Dendritic cell treated with granulocyte-macrophage colony-stimulating factor and Interleukin-4, amounts not matched to agents 40 ng/mL and 50 ng/mL, for 4 days (primary cell): ENCODE measurements at regions of chr2 and their contacts with region 1.

Region 1: GRCh38 chr2:26846328-26847306 is 1.3 kb upstream of the DPYSL5 start:
- H3K4me3 Mint-ChIP-seq: peak overlapping the region; percentile 13
- H3K27ac Mint-ChIP-seq: no peak overlapping the region
- H3K4me1 Mint-ChIP-seq: peaks cover 6% of the 10 kb centered on the region
- H3K27me3 Mint-ChIP-seq: peaks cover 70% of the 10 kb centered on the region

Region 2: GRCh38 chr2:26922405-26923188 is 76.0 kb after region 1 on chr2:
- intact Hi-C with region 1: loop called (anchors 5 kb)
- H3K4me3 Mint-ChIP-seq: no peak overlapping the region
- H3K27ac Mint-ChIP-seq: no peak overlapping the region
- H3K4me1 Mint-ChIP-seq: peaks cover 16% of the 10 kb centered on the region
- H3K27me3 Mint-ChIP-seq: peaks cover 4% of the 10 kb centered on the region

Region 3: GRCh38 chr2:26942543-26943295 is 96.1 kb after region 1 on chr2:
- intact Hi-C with region 1: loop called (anchors 1 kb)
- H3K4me3 Mint-ChIP-seq: no peak overlapping the region
- H3K27ac Mint-ChIP-seq: no peak overlapping the region
- H3K4me1 Mint-ChIP-seq: peaks cover 6% of the 10 kb centered on the region
- H3K27me3 Mint-ChIP-seq: peaks cover 26% of the 10 kb centered on the region

Region 4: DNA sequence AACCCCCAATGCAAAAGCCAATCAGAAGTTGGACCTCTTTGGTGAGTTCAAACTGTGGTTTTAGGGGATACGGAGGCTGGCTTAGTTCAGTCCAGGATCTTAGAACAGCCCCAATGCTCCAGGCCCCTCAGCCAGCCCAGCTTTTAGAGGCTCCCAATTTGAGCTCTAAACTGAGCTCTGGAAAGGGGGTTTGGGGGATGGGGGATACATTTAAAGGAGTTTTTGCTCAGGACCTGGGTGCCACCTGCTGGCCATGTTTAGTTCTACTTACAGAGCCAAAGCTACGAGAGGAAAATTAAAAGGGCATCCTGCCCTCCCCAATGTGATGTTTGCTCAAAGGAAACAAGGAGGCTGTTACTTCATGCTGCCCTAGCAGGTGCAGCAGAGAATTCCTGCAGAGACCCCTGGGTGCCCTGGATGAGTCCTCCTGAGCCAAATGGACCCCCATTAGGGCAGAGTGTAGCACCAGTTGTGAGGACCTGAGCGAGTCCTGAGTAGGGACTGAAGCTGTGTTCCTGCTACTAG is 170.2 kb after region 1 on chr2:
- intact Hi-C with region 1: loop called (anchors 5 kb)
- H3K4me3 Mint-ChIP-seq: no peak overlapping the region
- H3K27ac Mint-ChIP-seq: no peak overlapping the region
- H3K4me1 Mint-ChIP-seq: peaks cover 10% of the 10 kb centered on the region
- H3K27me3 Mint-ChIP-seq: peaks cover 2% of the 10 kb centered on the region

Region 5: GRCh38 chr2:27370026-27370815 is 523.6 kb after region 1 on chr2 and contains the starts of genes EIF2B4 and SNX17:
- intact Hi-C with region 1: no loop called
- H3K4me3 Mint-ChIP-seq: peak within 1 kb of the TSS; percentile 98
- H3K27ac Mint-ChIP-seq: peak within 1 kb of the TSS; percentile 95
- H3K4me1 Mint-ChIP-seq: peaks cover 58% of the 10 kb centered on the region
- H3K27me3 Mint-ChIP-seq: no peaks in the 10 kb centered on the region